ENCODE measurements at regions of chr1 and their contacts with region 1.

Region 1: DNA sequence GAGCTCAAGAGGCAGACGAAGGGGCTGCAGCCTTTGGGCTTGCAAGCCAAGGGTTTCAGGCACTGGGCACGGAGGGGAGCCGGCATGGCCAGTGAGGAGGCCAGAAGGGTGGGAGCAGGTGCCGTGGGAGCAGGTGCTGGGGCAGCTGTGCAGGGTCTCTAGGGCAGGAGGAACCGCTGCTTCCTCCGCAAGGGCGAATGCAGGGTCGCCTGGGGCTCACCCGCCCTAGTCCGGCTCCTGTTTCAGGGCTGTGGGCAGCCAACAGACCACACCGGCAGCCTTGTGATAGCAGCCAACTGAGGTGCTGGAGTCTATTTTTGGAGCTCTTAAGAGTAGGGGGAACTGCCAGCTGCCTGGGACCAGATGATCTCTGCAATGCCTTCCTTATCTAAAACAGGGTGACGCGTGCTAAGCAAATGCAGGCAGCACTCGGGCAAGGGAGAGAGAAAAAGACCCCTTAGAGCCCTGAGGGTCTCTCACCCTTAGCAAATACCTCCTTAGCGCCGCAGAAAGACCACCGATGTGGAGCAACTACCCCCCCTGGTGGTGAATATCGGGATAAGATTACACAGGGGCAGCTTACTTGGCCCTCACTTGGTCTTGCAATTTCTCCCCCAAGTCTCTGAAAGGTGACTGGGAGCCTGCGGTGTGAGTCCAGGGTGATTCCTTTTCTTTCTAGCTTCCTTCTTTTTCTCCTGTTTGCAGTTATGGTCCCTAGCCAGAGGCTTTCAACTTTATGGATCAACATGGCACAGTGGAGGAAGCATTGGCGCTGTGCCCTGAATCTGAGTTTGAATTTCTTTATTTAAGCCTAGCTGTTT is 20.7 kb upstream of the MAPKAPK2 start:
- DNase-seq: peak; percentile 86
- H3K4me3 Mint-ChIP-seq: no peak overlapping the region
- H3K27ac Mint-ChIP-seq: no peak overlapping the region
- H3K4me1 Mint-ChIP-seq: peaks cover 12% of the 10 kb centered on the region
- H3K27me3 Mint-ChIP-seq: peaks cover 26% of the 10 kb centered on the region
- CTCF ChIP-seq: peak; percentile 99

Region 2: GRCh38 chr1:206479183-206480125 is 184.6 kb before region 1 on chr1:
- CTCF ChIA-PET with region 1: interaction called, 25 read pairs
- POLR2A ChIA-PET with region 1: no interaction called
- intact Hi-C with region 1: no loop called
- DNase-seq: peak; percentile 93
- H3K4me3 Mint-ChIP-seq: no peak overlapping the region
- H3K27ac Mint-ChIP-seq: no peak overlapping the region
- H3K4me1 Mint-ChIP-seq: peaks cover 29% of the 10 kb centered on the region
- H3K27me3 Mint-ChIP-seq: no peaks in the 10 kb centered on the region
- CTCF ChIP-seq: peak; percentile 97

Region 3: DNA sequence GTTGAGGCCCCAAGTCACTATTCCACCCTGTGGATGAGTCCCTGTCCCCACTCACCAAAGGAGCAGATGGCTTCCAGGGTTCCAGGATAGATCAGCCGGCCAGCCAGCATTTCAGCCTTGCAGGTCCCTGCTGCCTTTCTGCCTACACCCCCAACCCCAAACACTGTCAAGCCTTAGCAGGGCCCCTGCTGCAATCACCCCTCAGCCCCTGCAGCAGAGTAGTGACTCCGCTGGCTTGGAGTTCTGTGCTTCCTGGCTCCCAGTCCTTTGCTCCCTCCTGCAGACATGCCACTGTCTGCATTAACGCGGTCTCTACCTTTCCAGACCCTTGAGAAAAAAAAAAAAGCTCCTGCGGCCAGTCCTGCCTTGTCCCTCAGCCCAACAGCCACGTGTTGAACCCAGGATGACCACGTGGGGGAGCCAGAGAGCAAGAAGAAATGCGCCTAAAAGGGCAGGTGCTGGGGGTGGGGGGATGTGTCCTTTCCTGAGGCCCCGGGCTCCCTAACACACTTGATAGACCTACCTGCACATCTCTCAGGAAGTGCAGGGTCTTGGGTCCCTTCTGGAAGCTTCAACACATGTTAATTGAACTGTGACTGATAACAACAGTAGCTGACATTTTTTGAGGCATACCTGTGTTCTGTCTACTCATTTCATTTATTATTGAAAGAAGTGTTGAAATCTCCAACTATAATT is 119.3 kb before region 1 on chr1:
- CTCF ChIA-PET with region 1: interaction called, 20 read pairs
- POLR2A ChIA-PET with region 1: no interaction called
- intact Hi-C with region 1: loop called (anchors 2 kb)
- DNase-seq: peak; percentile 89
- H3K4me3 Mint-ChIP-seq: no peak overlapping the region
- H3K27ac Mint-ChIP-seq: no peak overlapping the region
- H3K4me1 Mint-ChIP-seq: no peaks in the 10 kb centered on the region
- H3K27me3 Mint-ChIP-seq: no peaks in the 10 kb centered on the region
- CTCF ChIP-seq: peak; percentile 98

Region 4: GRCh38 chr1:206612129-206612876 is 51.7 kb before region 1 on chr1 and contains the start of gene EIF2D:
- CTCF ChIA-PET with region 1: interaction called, 356 read pairs
- POLR2A ChIA-PET with region 1: interaction called, 16 read pairs
- intact Hi-C with region 1: loop called (anchors 1 kb)
- DNase-seq: peak; percentile 99
- H3K4me3 Mint-ChIP-seq: peak within 1 kb of the TSS; percentile 88
- H3K27ac Mint-ChIP-seq: peak within 1 kb of the TSS; percentile 97
- H3K4me1 Mint-ChIP-seq: peaks cover 21% of the 10 kb centered on the region
- H3K27me3 Mint-ChIP-seq: no peaks in the 10 kb centered on the region
- CTCF ChIP-seq: peak; percentile 100
- total RNA-seq, gene EIF2D: 110 and 116 TPM in 2 replicates

Region 5: DNA sequence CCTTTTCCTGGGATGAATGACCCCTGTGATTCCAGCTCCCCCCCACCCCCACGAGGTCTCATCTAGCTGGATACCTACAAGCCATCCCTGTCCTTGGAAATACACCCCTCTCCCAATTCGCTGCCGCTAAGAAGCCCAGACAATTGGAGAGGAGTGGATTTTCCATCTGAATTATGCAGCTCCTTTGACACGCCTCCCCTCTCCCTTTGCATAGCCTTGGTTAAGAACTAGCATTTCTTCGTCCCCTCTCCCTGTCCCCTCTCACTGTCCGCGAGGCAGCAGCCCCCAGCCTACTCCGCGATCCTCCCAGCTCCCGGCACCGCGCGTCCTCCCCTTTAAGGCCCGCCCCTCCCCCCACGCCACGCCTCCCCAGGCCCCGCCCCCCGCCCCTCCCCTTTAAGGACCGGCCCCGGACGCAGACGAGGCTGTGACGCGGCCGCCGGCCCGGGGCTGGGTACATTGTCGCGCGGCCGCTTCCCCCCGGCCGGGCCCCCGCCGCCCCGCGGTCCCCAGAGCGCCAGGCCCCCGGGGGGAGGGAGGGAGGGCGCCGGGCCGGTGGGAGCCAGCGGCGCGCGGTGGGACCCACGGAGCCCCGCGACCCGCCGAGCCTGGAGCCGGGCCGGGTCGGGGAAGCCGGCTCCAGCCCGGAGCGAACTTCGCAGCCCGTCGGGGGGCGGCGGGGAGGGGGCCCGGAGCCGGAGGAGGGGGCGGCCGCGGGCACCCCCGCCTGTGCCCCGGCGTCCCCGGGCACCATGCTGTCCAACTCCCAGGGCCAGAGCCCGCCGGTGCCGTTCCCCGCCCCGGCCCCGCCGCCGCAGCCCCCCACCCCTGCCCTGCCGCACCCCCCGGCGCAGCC is 20.7 kb after region 1 on chr1 and contains the start of gene MAPKAPK2:
- CTCF ChIA-PET with region 1: interaction called, 142 read pairs
- POLR2A ChIA-PET with region 1: interaction called, 6 read pairs
- intact Hi-C with region 1: no loop called
- DNase-seq: peak; percentile 83
- H3K4me3 Mint-ChIP-seq: peak within 1 kb of the TSS; percentile 93
- H3K27ac Mint-ChIP-seq: peak within 1 kb of the TSS; percentile 97
- H3K4me1 Mint-ChIP-seq: peaks cover 46% of the 10 kb centered on the region
- H3K27me3 Mint-ChIP-seq: no peaks in the 10 kb centered on the region
- CTCF ChIP-seq: no peak
- total RNA-seq, gene MAPKAPK2: 142 and 178 TPM in 2 replicates

Region 6: GRCh38 chr1:206716870-206717673 is 53.0 kb after region 1 on chr1:
- CTCF ChIA-PET with region 1: interaction called, 12 read pairs
- POLR2A ChIA-PET with region 1: no interaction called
- intact Hi-C with region 1: no loop called
- DNase-seq: no peak
- H3K4me3 Mint-ChIP-seq: no peak overlapping the region
- H3K27ac Mint-ChIP-seq: peak overlapping the region; percentile 9
- H3K4me1 Mint-ChIP-seq: peaks cover 58% of the 10 kb centered on the region
- H3K27me3 Mint-ChIP-seq: no peaks in the 10 kb centered on the region
- CTCF ChIP-seq: no peak

Measured in MCF 10A (cell line).